Activated CD4-positive, alpha-beta T cell treated with anti-CD3 and anti-CD28 coated beads for 36 hours (primary cell): ENCODE measurements at regions of chr18 and their contacts with region 1.

Region 1: GRCh38 chr18:7566567-7567473 is at the start of gene PTPRM:
- DNase-seq: peak; percentile 78
- ATAC-seq: peak; percentile 94
- H3K4me3 Mint-ChIP-seq: peak within 1 kb of the TSS; percentile 10
- H3K27ac Mint-ChIP-seq: no peak within 1 kb of the TSS
- H3K4me1 Mint-ChIP-seq: peaks cover 2% of the 10 kb centered on the region
- H3K27me3 Mint-ChIP-seq: peaks cover 42% of the 10 kb centered on the region
- total RNA-seq, gene PTPRM: 6.5 to 14.0 TPM

Region 2: DNA sequence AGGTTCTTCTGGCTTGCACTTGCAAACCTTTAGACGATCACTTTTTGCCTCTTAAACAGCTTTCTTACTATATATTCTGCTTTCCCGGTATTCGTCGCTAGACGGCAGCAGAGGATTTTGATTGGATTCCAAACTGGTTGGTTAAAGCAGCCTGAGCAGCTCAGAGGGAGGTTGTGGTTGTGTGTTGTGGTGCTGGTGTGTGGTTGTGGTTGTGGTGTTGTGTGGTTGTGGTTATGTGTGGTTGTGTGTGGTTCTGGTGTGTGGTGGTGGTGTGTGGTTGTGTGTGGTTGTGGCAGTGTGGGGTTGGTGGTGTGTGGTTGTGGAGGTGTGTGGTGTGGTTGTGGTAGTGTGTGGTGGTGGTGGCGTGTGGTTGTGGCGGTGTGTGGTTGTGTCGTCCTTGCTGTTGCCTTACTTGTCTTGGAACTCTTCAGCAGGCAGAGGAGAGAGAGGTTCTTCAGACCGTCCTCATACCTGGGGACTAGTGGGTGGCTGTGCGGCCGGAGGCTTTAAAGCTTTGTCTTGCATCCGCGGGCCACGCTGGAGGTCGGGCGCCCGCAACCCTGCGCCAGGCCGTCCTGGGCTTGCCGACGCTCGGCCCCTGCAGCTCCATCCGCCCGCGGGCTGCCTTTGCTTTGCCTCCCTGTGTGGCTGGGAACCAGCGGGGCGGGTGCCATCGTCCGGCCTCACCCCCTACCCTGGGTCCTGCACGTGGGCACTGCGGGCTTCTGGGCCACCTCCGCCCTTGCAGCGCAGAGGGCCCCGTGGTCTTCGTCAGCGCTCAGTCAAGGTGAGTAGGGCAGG is 646.5 kb before region 1 on chr18:
- CTCF ChIA-PET with region 1: no interaction called
- POLR2A ChIA-PET with region 1: no interaction called
- intact Hi-C with region 1: loop called in 1 of 2 experiments (anchors 1 kb)
- DNase-seq: peak; percentile 57
- ATAC-seq: no peak
- H3K4me3 Mint-ChIP-seq: peak overlapping the region; percentile 12
- H3K27ac Mint-ChIP-seq: peak overlapping the region; percentile 53
- H3K4me1 Mint-ChIP-seq: no peaks in the 10 kb centered on the region
- H3K27me3 Mint-ChIP-seq: peaks cover 8% of the 10 kb centered on the region

Region 3: DNA sequence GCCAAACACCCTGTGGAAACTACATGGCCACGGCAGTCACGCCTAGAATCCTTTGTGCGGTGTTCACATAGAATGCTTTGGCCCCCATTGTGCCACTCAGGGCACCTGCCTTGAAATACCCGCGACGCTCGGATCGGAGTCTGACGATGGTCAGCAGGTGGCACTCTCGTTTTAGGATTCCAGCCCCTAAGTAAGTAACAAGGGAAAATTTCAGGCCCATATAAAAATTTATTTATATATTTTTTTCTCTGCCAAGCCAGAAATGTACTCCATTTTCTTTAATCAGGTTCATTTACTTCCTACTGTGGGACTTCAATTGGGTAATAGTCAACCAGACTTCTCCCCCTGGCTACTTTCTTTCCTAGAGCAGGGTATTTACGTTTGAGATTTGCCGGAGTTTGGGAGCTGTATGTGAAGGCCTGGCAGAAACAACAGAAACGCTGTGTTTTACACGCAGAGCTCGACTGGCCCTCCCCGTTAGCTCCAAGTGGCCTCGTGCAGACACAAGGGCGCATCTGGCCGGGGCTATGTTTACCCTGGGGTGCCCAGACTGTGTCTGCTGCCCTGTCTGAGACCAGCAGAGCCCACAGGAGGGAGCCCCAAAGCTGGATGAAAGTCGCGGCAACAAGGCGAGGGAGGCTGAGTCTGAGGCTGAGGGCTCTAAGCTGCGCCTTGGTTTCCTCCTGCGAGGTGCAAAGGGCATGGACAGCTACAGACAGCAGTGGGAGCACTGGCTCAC is 294.3 kb before region 1 on chr18:
- CTCF ChIA-PET with region 1: interaction called, 3 read pairs
- POLR2A ChIA-PET with region 1: no interaction called
- intact Hi-C with region 1: loop called in 1 of 2 experiments (anchors 5 kb)
- DNase-seq: peak; percentile 42
- ATAC-seq: no peak
- H3K4me3 Mint-ChIP-seq: no peak overlapping the region
- H3K27ac Mint-ChIP-seq: no peak overlapping the region
- H3K4me1 Mint-ChIP-seq: no peaks in the 10 kb centered on the region
- H3K27me3 Mint-ChIP-seq: peaks cover 7% of the 10 kb centered on the region

Region 4: DNA sequence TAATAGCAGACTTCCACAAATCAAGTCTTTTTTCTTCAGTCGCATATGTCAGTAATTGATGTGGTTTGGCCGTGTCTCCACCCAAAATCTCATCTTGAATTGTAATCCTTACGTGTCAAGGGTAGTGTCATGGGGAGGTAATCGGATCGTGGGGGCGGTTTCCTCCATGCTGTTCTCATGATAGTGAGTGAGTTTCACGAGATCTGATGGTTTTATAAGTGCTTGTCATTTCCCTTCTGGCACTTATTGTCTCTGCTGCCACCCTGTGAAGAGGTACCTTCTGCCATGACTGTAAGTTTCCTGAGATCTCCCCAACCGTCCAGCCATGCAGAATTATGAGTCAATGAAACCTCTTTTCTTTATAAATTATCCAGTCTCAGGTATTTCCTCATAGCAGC is 479.1 kb after region 1 on chr18:
- CTCF ChIA-PET with region 1: interaction called, 3 read pairs
- POLR2A ChIA-PET with region 1: no interaction called
- intact Hi-C with region 1: loop called in 1 of 2 experiments (anchors 10 kb)
- DNase-seq: peak; percentile 83
- ATAC-seq: peak; percentile 87
- H3K4me3 Mint-ChIP-seq: no peak overlapping the region
- H3K27ac Mint-ChIP-seq: peak overlapping the region; percentile 87
- H3K4me1 Mint-ChIP-seq: peaks cover 40% of the 10 kb centered on the region
- H3K27me3 Mint-ChIP-seq: no peaks in the 10 kb centered on the region

Region 5: GRCh38 chr18:8704361-8705279 is 1137.8 kb after region 1 on chr18:
- CTCF ChIA-PET with region 1: no interaction called
- POLR2A ChIA-PET with region 1: no interaction called
- intact Hi-C with region 1: loop called in 1 of 2 experiments (anchors 5 kb)
- DNase-seq: peak; percentile 90
- ATAC-seq: peak; percentile 98
- H3K4me3 Mint-ChIP-seq: peak overlapping the region; percentile 80
- H3K27ac Mint-ChIP-seq: no peak overlapping the region
- H3K4me1 Mint-ChIP-seq: peaks cover 12% of the 10 kb centered on the region
- H3K27me3 Mint-ChIP-seq: peaks cover 47% of the 10 kb centered on the region